Dorsolateral prefrontal cortex (tissue), 120 donors: ENCODE measurements at regions of chr19 and their contacts with region 1.

Region 1: GRCh38 chr19:18152444-18152816 is 533 bp upstream of the PIK3R2 start:
- DNase-seq: peak; percentile 87 to 98 (median 96)
- H3K4me3 ChIP-seq: peak overlapping the region; percentile 42 to 99 (median 88)
- H3K27ac ChIP-seq: peak overlapping the region; percentile 89 to 99 (median 97)
- H3K27me3 ChIP-seq: no peaks in the 10 kb centered on the region
- CTCF ChIP-seq: peak in 54 of 56 donors; percentile 30 to 78 (median 61)

Region 2: DNA sequence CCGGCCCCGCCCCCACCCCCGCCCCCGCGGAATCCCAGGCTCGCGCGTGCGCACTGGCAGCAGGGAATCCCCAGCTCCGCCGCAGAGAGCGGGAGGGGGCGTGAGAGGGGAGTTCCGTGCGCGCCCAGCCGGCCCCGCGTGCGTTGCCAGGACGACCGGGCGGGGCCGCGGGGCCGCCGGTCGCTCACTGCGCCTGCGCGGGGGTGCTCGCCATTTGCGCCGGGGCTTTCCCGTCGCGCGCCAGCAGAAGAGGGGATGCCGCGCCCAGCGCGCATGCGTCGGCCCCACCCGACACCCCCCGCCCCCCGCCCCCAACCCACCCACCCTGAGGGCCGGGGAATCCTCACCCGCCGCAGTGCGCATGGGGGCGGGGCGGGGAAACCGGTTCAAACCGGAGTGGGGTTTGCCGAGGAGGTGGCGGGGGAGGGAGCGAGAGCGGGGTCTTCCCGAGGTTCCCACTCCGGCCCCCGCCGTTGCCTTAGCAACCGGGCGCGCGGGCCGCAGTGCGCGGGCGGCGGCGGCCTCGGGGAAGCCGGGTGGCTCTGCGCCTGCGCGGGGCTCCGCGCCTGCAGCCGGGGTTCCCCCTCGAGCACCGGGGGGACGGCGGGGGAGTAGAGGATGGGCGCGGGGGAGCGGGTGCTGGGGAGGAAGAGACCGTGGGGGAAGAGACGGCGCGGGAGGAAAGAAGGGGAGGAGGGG is 204.5 kb before region 1 on chr19:
- intact Hi-C with region 1: loop called in 1 of 2 experiments (anchors 10 kb)
- DNase-seq: peak; percentile 69 to 93 (median 84)
- H3K4me3 ChIP-seq: peak overlapping the region; percentile 53 to 82 (median 70)
- H3K27ac ChIP-seq: peak overlapping the region in 47 of 59 donors; percentile 29 to 88 (median 70)
- H3K27me3 ChIP-seq: peaks cover 0 to 37% (median 25%) of the 10 kb centered on the region in 45 donors
- CTCF ChIP-seq: peak in 12 of 56 donors; percentile 6 to 57 (median 22)

Region 3: GRCh38 chr19:18007044-18007916 is 145.2 kb before region 1 on chr19:
- intact Hi-C with region 1: loop called (anchors 5 to 10 kb)
- DNase-seq: peak; percentile 75 to 93 (median 82)
- H3K4me3 ChIP-seq: peak overlapping the region; percentile 50 to 94 (median 73)
- H3K27ac ChIP-seq: peak overlapping the region; percentile 72 to 99 (median 93)
- H3K27me3 ChIP-seq: no peaks in the 10 kb centered on the region
- CTCF ChIP-seq: peak; percentile 90 to 100 (median 98)

Region 4: DNA sequence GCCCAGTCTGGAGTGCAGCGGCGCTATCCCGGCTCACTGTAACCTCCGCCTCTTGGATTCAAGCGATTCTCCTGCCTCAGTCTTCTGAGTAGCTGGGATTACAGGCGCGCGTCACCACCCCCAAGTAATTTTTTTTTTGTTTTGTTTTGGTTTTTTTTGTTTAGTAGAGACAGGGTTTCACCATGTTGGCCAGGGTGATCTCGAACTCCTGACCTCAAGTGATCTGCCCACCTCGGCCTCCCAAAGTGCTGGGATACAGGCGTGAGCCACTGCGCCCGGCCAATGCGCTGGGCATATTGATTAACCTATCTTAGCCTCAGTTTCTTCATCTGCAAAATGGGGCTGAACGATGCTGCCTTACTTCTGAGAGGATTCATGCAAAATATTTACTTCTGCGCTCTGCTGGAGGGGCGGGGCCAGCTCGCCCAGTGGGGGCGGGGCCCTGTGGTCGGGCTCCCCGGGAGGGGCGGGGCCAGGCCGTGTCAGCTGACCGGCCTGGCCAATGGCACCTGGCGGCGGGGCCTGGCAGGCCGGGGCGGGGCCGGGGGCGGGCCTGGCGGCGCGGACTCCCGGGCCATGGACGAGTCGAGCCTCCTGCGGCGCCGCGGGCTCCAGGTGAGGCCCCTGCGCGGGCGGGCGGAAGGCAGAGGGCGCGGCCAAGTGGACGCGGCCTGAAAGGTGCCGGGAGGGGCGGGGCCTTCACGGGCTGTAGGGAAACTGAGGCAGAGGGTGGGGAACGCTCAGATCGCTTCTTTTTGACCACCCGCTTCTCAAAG is 55.0 kb before region 1 on chr19 and contains the start of gene MAST3:
- intact Hi-C with region 1: no loop called
- DNase-seq: peak; percentile 27 to 92 (median 88)
- H3K4me3 ChIP-seq: peak within 1 kb of the TSS; percentile 52 to 94 (median 76)
- H3K27ac ChIP-seq: peak within 1 kb of the TSS; percentile 4 to 100 (median 90)
- H3K27me3 ChIP-seq: peaks cover 0 to 7% (median 0%) of the 10 kb centered on the region in 45 donors
- CTCF ChIP-seq: peak in 3 of 56 donors; percentile 15 to 25 (median 22)
- total RNA-seq, gene MAST3: 138 to 282 (median 205) TPM

Region 5: GRCh38 chr19:18192673-18193387 is 40.4 kb after region 1 on chr19 and contains the start of gene MPV17L2:
- intact Hi-C with region 1: loop called (anchors 5 kb)
- DNase-seq: peak; percentile 100
- H3K4me3 ChIP-seq: peak within 1 kb of the TSS; percentile 71 to 98 (median 87)
- H3K27ac ChIP-seq: peak within 1 kb of the TSS; percentile 72 to 99 (median 95)
- H3K27me3 ChIP-seq: no peaks in the 10 kb centered on the region
- CTCF ChIP-seq: peak in 15 of 56 donors; percentile 5 to 45 (median 11)
- total RNA-seq, gene MPV17L2: 3.8 to 12.2 (median 7.5) TPM